ENCODE measurements at regions of chr5 and their contacts with region 1.

Region 1: DNA sequence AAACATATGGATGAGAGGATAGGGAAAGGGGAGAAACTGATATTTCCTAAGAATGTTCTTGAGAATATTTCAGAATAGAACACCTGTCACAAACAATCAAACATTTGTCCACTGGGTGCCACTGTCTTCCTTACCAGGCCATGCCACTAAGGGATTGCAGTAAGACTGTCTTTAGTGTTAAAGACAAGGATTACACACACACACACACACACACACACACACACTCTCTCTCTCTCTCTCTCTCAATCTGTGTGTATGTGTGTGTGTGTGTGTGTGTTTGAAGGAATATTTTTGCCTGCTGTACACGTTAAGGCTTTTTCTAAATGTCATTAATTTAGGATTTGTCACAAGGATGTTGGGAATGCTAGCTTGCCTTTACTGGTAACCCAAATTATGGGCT is 54.4 kb downstream of the CCDC192 start:
- DNase-seq: peak; percentile 83
- H3K4me3 ChIP-seq: no peak overlapping the region
- H3K27ac ChIP-seq: no peak overlapping the region
- H3K4me1 ChIP-seq: peaks cover 4% of the 10 kb centered on the region
- H3K27me3 ChIP-seq: no peaks in the 10 kb centered on the region
- CTCF ChIP-seq: peak; percentile 33 to 37
- POLR2A ChIP-seq: no peak

Region 2: DNA sequence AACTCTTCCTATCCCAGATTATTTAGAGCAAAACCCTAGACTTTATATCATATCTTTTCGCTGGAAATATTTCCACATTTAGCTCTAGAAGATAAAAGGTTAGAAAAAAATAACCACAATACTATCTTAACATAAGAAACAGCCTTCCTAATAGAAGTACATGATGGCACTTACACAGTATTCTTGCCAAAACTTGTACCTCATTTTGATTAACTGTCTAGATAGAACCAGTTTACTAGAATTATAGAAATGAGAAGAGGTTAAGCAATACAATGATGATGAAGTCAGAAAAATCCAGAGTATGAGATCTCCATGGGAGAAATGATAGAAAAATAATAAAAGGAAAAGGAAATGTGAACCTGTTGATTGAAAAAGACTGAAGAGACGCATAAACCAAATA is 389.1 kb after region 1 on chr5:
- CTCF ChIA-PET with region 1: no interaction called
- POLR2A ChIA-PET with region 1: no interaction called
- dilution Hi-C with region 1: no loop called
- intact Hi-C with region 1: loop called (anchors 5 kb)
- DNase-seq: no peak
- H3K4me3 ChIP-seq: no peak overlapping the region
- H3K27ac ChIP-seq: no peak overlapping the region
- H3K4me1 ChIP-seq: no peaks in the 10 kb centered on the region
- H3K27me3 ChIP-seq: no peaks in the 10 kb centered on the region
- CTCF ChIP-seq: no peak
- POLR2A ChIP-seq: no peak

Region 3: GRCh38 chr5:128201065-128201926 is 443.7 kb after region 1 on chr5:
- CTCF ChIA-PET with region 1: interaction called, 40 read pairs
- POLR2A ChIA-PET with region 1: no interaction called
- dilution Hi-C with region 1: no loop called
- intact Hi-C with region 1: loop called (anchors 1 kb)
- DNase-seq: peak; percentile 63
- H3K4me3 ChIP-seq: no peak overlapping the region
- H3K27ac ChIP-seq: no peak overlapping the region
- H3K4me1 ChIP-seq: peaks cover 10% of the 10 kb centered on the region
- H3K27me3 ChIP-seq: no peaks in the 10 kb centered on the region
- CTCF ChIP-seq: peak; percentile 79 to 85
- POLR2A ChIP-seq: no peak